Posterior cingulate gyrus (tissue), 11 donors: ENCODE measurements at regions of chr7 and their contacts with region 1.

Region 1: DNA sequence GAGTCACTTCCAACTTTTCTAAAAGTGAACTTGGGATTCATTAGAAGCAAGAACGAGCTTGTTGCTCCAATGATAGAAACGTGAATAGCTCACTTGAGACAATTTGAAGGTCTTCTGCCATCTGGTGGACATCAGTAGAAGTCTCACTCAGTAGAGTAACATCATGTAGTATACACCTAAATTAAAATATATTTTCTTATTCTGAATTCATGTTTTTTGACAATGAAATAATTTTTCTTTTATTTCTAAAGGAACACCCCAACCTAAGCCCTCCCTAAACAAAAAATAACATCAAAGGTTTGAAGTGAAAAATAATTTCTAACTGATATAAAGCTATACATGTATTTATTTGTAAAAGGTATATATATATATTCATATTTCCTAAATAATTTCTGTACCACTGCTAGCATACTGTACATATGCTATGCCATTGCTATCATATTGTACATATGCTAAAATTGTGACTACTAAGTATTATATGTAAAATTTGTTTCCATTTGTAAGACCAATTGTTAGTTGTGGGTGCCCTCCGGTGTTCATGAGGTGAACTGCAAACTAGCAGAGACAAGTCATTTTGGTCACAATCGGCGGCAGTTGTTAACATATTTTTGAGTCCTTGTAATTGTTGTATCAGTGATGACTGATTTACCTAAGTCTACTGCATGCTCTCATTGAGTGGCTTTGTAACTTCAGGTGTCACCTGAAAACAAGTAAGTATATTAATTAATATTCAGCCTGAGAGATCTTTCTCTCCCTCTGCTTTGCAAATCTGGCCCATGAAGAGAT is 121.9 kb downstream of the PTPRZ1 start:
- DNase-seq: peak in 9 of 10 donors; percentile 21 to 91 (median 61)

Region 2: DNA sequence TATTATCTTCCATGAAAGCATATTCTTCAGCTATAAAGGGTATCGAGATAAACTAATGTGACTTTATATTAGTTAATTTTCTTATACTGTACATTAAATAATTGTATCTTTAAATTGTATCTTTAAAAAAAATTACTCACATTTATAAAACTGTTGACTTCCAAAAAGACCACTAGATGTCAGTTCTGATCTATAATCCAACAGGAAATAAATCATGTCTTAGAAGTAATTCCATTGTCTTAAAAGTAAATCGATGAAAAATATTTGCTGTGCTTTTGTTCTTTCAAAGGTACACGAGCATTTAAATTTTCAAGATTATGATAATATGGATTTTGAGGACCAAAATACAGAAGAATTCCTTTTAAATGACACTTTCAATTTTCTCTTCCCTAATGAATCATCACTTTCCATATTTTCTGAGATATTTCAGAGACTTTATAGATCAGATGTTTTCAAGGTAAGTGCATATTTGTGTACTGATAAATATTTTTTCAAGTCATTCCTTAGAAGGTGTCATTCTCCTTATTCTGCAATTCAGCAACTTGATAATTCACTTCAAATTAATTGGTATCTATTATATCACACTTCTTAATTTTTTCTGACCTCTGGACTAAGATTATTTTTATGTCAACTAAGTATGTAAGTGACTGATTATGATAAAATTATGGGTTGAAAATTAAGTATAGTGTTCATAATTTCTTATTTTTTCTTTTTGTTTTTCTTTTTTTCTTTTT is 867.9 kb before region 1 on chr7:
- intact Hi-C with region 1: loop called (anchors 10 kb)
- DNase-seq: no peak

Region 3: DNA sequence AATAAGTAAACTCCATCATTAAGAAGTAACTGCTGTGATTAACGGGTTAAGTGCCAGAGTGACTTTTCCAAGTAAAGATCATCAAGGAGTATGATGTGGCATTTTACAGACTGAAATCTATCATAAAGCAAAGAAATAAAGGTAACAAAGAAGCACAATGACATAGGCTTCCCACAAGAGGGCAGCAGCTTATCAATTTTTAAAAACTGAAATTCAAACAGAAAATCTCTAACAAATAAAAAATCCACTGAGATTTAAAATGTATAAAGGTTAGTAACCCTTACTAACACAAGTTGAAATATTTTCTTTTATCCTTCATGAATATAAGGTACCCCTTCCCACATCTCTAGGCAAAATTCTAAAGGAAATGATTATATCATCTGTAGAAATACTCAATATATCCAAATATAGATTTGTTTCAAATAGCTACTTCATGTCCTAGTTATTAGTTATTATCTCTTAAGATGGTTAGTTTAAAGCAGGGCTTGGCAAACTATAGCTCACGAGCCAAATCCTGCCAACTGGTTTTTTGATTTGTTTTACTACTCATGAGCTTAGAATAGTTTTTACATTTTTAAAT is 627.9 kb before region 1 on chr7:
- intact Hi-C with region 1: loop called (anchors 2 kb)
- DNase-seq: no peak

Region 4: DNA sequence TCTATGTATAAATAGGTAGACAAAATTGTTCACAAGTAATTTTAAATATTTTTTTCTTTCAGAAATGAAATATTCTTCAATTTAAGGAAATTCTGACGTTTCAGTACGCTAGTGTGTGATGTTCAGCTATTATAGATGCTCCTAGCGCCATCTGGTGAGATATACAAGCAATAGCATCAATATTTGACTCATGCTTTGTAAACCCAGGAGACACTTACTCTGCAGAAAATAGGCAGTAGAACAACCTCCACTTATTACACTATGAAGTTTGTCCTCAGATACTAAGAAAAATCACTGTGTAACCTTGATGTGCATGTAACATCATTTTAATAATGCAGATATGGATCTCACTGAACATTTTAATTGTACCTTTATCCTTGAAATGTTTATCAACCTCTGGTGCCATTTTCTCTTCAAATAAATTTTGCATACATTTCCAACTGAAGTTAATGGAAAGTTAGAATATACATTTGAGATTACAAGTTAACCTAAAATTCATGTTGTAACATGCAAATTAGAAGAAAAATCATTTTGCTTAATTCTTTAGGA is 447.2 kb before region 1 on chr7:
- intact Hi-C with region 1: loop called (anchors 5 kb)
- DNase-seq: no peak

Region 5: GRCh38 chr7:121605317-121605680 is 389.5 kb before region 1 on chr7:
- intact Hi-C with region 1: loop called (anchors 10 kb)
- DNase-seq: no peak

Region 6: GRCh38 chr7:121752706-121753105 is 242.1 kb before region 1 on chr7:
- intact Hi-C with region 1: loop called (anchors 1 kb)
- DNase-seq: no peak

Region 7: GRCh38 chr7:121954803-121955202 is 40.0 kb before region 1 on chr7:
- intact Hi-C with region 1: no loop called
- DNase-seq: no peak